MCF 10A (cell line): ENCODE measurements at regions of chr16 and their contacts with region 1.

Region 1: GRCh38 chr16:71961066-71962039 is 38.8 kb downstream of the PKD1L3 start:
- DNase-seq: peak; percentile 89
- H3K4me3 Mint-ChIP-seq: no peak overlapping the region
- H3K27ac Mint-ChIP-seq: no peak overlapping the region
- H3K4me1 Mint-ChIP-seq: no peaks in the 10 kb centered on the region
- H3K27me3 Mint-ChIP-seq: peaks cover 13% of the 10 kb centered on the region
- CTCF ChIP-seq: peak; percentile 76

Region 2: GRCh38 chr16:71412270-71413160 is 548.8 kb before region 1 on chr16:
- CTCF ChIA-PET with region 1: interaction called, 3 read pairs
- POLR2A ChIA-PET with region 1: no interaction called
- intact Hi-C with region 1: loop called (anchors 10 kb)
- DNase-seq: peak; percentile 80
- H3K4me3 Mint-ChIP-seq: no peak overlapping the region
- H3K27ac Mint-ChIP-seq: no peak overlapping the region
- H3K4me1 Mint-ChIP-seq: no peaks in the 10 kb centered on the region
- H3K27me3 Mint-ChIP-seq: peaks cover 53% of the 10 kb centered on the region
- CTCF ChIP-seq: peak; percentile 63

Region 3: GRCh38 chr16:71746442-71747046 is 214.8 kb before region 1 on chr16:
- CTCF ChIA-PET with region 1: interaction called, 3 read pairs
- POLR2A ChIA-PET with region 1: no interaction called
- intact Hi-C with region 1: loop called (anchors 10 kb)
- DNase-seq: peak; percentile 43
- H3K4me3 Mint-ChIP-seq: no peak overlapping the region
- H3K27ac Mint-ChIP-seq: no peak overlapping the region
- H3K4me1 Mint-ChIP-seq: no peaks in the 10 kb centered on the region
- H3K27me3 Mint-ChIP-seq: no peaks in the 10 kb centered on the region
- CTCF ChIP-seq: peak; percentile 58

Region 4: DNA sequence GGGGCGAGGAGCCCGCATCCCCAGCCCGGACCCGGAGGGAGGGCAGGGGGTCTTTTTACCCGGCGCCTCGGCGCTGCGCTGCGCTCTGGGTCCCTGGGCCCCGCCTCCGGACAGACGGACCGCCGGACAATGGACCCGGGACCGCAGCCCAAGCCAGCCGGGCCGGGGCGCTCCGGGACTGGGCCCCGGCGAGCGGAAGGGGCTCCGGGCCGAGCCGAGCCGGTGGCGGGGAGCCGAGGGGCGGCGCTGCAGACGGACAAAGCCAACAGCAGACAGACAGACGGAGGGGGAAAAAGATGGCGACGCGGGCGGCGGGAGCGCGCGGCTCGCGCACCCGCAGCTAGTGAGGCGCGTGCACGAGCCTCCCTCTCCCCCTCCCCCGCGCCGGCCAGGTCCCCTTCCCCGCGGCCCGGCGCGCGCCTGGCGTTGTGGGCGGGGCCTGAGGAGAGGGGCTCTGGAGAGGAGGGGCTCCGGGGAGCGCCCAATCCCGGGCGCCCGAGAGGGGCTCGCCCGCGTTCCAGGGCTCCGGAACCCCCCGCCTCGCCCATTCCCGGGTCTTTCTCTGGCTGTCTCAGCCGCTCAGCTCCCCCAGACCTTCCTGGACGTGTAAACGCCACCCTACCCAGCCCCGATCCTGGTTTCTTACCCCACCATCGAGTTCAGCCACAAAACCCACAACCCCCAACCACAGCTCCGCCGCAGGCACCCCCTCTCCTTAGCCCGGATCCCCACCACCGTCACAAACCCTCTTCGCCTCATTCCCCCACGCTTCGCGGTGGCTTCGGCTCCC is 77.3 kb before region 1 on chr16 and contains the start of gene ZNF821:
- CTCF ChIA-PET with region 1: interaction called, 7 read pairs
- POLR2A ChIA-PET with region 1: interaction called, 6 read pairs
- intact Hi-C with region 1: loop called (anchors 1 kb)
- DNase-seq: peak; percentile 56
- H3K4me3 Mint-ChIP-seq: peak within 1 kb of the TSS; percentile 86
- H3K27ac Mint-ChIP-seq: peak within 1 kb of the TSS; percentile 49
- H3K4me1 Mint-ChIP-seq: peaks cover 9% of the 10 kb centered on the region
- H3K27me3 Mint-ChIP-seq: no peaks in the 10 kb centered on the region
- CTCF ChIP-seq: peak; percentile 46
- total RNA-seq, gene ZNF821: 3.4 and 4.4 TPM in 2 replicates

Region 5: DNA sequence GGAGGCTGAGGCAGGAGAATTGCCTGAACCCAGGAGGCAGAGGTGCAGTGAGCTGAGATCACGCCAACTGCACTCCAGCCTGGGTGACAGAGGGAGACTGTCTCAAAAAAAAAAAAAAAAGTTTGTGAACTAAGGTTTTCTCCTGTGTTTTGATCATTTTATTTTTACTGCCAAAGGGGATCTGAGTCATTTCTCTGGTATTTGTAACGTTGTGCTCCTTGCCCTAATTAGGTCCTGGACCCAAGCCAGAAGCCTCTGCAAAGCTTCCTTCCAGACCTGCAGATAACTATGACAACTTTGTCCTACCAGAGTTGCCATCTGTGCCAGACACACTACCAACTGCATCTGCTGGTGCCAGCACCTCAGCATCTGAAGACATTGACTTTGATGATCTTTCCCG is 34.0 kb before region 1 on chr16:
- CTCF ChIA-PET with region 1: interaction called, 12 read pairs
- POLR2A ChIA-PET with region 1: no interaction called
- intact Hi-C with region 1: no loop called
- DNase-seq: peak; percentile 92
- H3K4me3 Mint-ChIP-seq: peak overlapping the region; percentile 18
- H3K27ac Mint-ChIP-seq: peak overlapping the region; percentile 83
- H3K4me1 Mint-ChIP-seq: peaks cover 27% of the 10 kb centered on the region
- H3K27me3 Mint-ChIP-seq: no peaks in the 10 kb centered on the region
- CTCF ChIP-seq: no peak

Region 6: DNA sequence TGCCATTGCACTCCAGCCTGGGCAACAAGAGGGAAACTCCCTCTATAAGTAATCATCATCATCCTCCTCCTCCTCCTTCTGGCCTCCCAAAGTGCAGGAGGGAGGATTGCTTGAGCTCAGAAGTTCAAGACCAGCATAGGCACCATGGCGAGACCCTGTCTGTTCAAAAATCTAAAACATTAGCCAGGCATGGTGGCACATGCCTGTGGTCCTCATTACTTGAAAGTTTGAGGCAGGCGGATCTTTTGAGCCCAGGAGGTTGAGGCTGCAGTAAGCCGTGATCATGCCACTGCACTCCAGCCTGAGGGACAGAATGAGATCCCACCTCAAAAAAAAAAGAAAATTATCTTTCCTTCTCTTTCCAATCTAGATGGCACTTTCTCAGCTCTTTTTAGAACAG is 11.0 kb after region 1 on chr16:
- CTCF ChIA-PET with region 1: interaction called, 11 read pairs
- POLR2A ChIA-PET with region 1: interaction called, 3 read pairs
- intact Hi-C with region 1: no loop called
- DNase-seq: no peak
- H3K4me3 Mint-ChIP-seq: no peak overlapping the region
- H3K27ac Mint-ChIP-seq: no peak overlapping the region
- H3K4me1 Mint-ChIP-seq: no peaks in the 10 kb centered on the region
- H3K27me3 Mint-ChIP-seq: no peaks in the 10 kb centered on the region
- CTCF ChIP-seq: no peak

Region 7: DNA sequence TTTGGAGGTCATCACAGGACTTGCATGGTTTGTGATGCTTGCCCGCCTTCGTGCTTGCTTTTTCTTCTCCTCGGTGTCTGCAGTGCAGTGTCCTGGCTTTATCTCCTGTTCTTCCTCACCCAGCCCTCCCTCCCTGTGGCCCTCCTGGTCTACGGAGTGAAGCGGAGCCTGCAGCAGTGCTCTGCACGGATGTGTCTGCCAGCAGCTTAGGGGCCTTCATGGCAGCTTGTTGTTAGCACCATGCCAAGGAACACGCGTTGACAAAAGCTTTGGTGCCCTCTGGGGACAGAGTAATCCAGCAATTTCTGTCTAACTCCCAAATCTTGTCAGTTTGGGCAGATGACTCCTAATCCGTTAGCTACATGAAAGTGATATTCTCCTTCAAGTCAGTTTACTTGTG is 57.1 kb after region 1 on chr16:
- CTCF ChIA-PET with region 1: no interaction called
- POLR2A ChIA-PET with region 1: no interaction called
- intact Hi-C with region 1: no loop called
- DNase-seq: no peak
- H3K4me3 Mint-ChIP-seq: no peak overlapping the region
- H3K27ac Mint-ChIP-seq: no peak overlapping the region
- H3K4me1 Mint-ChIP-seq: peaks cover 13% of the 10 kb centered on the region
- H3K27me3 Mint-ChIP-seq: no peaks in the 10 kb centered on the region
- CTCF ChIP-seq: no peak

Region 8: DNA sequence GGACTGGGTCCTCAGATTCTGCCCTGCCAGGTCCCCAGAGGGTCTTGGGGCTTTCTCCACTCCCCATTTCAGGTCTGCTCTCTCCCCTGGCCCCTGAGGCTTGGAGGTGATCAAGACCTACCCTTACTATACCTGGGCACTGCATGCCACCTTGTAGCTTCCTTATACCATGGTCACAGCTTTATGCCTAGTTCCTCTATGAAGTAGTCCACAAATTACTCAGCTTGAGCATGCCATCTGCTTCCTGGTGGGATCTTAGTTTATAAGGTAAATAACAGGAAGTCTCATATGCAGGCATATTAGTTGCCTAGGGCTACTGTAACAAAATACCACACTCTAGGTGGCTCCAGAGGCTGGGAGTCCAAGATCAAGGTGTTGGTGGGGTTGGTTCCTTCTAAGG is 221.6 kb after region 1 on chr16:
- CTCF ChIA-PET with region 1: no interaction called
- POLR2A ChIA-PET with region 1: no interaction called
- intact Hi-C with region 1: no loop called
- DNase-seq: no peak
- H3K4me3 Mint-ChIP-seq: no peak overlapping the region
- H3K27ac Mint-ChIP-seq: no peak overlapping the region
- H3K4me1 Mint-ChIP-seq: no peaks in the 10 kb centered on the region
- H3K27me3 Mint-ChIP-seq: no peaks in the 10 kb centered on the region
- CTCF ChIP-seq: no peak

Region 9: DNA sequence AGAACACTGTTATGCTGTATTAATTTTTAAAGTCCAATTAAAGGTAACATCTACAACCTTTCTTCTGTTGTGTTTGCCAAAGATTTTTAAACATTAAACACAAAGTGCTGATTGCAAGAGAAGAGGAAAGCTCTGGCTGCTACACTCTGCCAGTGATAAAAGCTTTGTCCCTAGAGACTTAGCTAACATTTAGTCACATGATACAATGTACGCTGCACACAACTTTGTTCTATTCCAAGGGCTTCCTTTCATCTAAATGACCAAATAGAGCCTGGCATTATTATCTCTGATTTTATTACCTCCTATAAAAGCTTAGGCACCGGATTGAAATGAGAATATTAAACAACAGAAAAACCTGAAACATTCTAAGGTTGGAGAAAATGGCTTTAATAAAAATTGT is 599.3 kb after region 1 on chr16:
- CTCF ChIA-PET with region 1: no interaction called
- POLR2A ChIA-PET with region 1: no interaction called
- intact Hi-C with region 1: no loop called
- DNase-seq: no peak
- H3K4me3 Mint-ChIP-seq: no peak overlapping the region
- H3K27ac Mint-ChIP-seq: no peak overlapping the region
- H3K4me1 Mint-ChIP-seq: no peaks in the 10 kb centered on the region
- H3K27me3 Mint-ChIP-seq: no peaks in the 10 kb centered on the region
- CTCF ChIP-seq: no peak